ENCODE measurements at regions of chr19 and their contacts with region 1.

Region 1: GRCh38 chr19:38402967-38403861 is at the start of gene FAM98C:
- DNase-seq: peak; percentile 95 to 99 (median 97)
- H3K4me3 ChIP-seq: peak within 1 kb of the TSS; percentile 82
- H3K27ac ChIP-seq: peak within 1 kb of the TSS in 1 of 2 donors; percentile 55
- H3K4me1 ChIP-seq: no peaks in the 10 kb centered on the region
- H3K27me3 ChIP-seq: no peaks in the 10 kb centered on the region
- CTCF ChIP-seq: peak; percentile 98 to 100 (median 99)
- EP300 ChIP-seq: no peak
- POLR2A ChIP-seq: no peak
- total RNA-seq, gene FAM98C: 16.5 to 23.7 (median 20.9) TPM

Region 2: DNA sequence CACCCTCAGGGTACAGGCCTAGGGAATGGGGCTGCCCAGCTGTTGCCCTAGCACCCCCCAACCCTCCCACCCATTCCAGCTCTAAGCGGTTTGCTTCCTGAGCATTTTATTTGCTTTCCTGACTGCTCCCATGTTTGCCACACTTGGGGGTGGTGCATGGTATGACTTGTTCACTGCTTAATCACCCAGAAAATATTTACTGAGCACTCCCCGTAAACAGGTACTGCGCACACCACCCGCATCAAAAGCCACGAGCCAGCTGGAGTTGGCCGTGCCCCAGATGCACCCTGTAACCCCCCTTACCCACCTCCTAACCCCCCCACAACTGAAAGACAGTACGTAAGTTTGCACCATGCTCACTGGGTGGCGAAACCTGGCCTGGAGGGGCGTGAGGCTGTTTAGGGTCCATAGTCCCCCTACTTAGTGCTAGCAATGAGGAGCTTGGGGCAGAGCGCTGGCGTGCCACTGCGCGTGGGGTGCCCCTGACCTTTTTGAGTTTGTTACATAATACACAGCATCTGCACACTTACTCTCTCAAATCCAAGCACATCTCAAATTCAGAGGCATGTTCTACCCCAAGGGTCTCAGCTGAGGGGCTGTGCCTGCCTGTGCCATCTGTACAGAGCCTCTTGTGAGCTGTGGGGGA is 209.0 kb before region 1 on chr19:
- intact Hi-C with region 1: no loop called
- DNase-seq: no peak
- H3K4me3 ChIP-seq: no peak overlapping the region
- H3K27ac ChIP-seq: no peak overlapping the region
- H3K4me1 ChIP-seq: no peaks in the 10 kb centered on the region
- H3K27me3 ChIP-seq: no peaks in the 10 kb centered on the region
- CTCF ChIP-seq: no peak
- EP300 ChIP-seq: no peak
- POLR2A ChIP-seq: no peak

Region 3: GRCh38 chr19:38387550-38388348 is 15.5 kb before region 1 on chr19 and contains the start of gene GGN:
- intact Hi-C with region 1: loop called in 1 of 4 experiments (anchors 2 kb)
- DNase-seq: peak; percentile 67 to 83 (median 81)
- H3K4me3 ChIP-seq: peak within 1 kb of the TSS; percentile 52
- H3K27ac ChIP-seq: peak within 1 kb of the TSS in 1 of 2 donors; percentile 31
- H3K4me1 ChIP-seq: peaks cover 10% of the 10 kb centered on the region
- H3K27me3 ChIP-seq: no peaks in the 10 kb centered on the region
- CTCF ChIP-seq: no peak
- EP300 ChIP-seq: no peak
- POLR2A ChIP-seq: no peak
- total RNA-seq, gene GGN: 0.24 to 0.75 (median 0.69) TPM in 5 of 7 donors, not detected in the others

Region 4: GRCh38 chr19:38452428-38453366 is 49.5 kb after region 1 on chr19:
- intact Hi-C with region 1: no loop called
- DNase-seq: no peak
- H3K4me3 ChIP-seq: no peak overlapping the region
- H3K27ac ChIP-seq: no peak overlapping the region
- H3K4me1 ChIP-seq: no peaks in the 10 kb centered on the region
- H3K27me3 ChIP-seq: no peaks in the 10 kb centered on the region
- CTCF ChIP-seq: no peak
- EP300 ChIP-seq: no peak
- POLR2A ChIP-seq: no peak

Region 5: DNA sequence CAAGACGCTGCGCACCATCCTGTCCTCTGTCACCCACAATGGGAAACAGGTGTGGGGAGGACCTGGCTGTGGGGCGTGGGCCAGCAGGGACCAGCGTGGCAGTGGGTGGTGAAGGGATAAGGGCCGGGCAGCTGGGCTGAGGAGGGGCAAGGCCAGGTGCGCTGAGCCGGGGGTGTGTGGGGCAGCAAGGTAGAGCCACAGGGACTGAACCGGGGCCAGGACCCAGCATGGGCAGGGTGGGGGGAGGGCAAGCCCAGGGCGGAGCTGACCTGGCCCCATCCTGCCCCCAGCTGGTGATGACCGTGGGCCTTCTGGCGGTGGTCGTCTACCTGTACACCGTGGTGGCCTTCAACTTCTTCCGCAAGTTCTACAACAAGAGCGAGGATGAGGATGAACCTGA is 176.9 kb after region 1 on chr19:
- intact Hi-C with region 1: no loop called
- DNase-seq: no peak
- H3K4me3 ChIP-seq: no peak overlapping the region
- H3K27ac ChIP-seq: no peak overlapping the region
- H3K4me1 ChIP-seq: no peaks in the 10 kb centered on the region
- H3K27me3 ChIP-seq: no peaks in the 10 kb centered on the region
- CTCF ChIP-seq: no peak
- EP300 ChIP-seq: no peak
- POLR2A ChIP-seq: no peak

Region 6: DNA sequence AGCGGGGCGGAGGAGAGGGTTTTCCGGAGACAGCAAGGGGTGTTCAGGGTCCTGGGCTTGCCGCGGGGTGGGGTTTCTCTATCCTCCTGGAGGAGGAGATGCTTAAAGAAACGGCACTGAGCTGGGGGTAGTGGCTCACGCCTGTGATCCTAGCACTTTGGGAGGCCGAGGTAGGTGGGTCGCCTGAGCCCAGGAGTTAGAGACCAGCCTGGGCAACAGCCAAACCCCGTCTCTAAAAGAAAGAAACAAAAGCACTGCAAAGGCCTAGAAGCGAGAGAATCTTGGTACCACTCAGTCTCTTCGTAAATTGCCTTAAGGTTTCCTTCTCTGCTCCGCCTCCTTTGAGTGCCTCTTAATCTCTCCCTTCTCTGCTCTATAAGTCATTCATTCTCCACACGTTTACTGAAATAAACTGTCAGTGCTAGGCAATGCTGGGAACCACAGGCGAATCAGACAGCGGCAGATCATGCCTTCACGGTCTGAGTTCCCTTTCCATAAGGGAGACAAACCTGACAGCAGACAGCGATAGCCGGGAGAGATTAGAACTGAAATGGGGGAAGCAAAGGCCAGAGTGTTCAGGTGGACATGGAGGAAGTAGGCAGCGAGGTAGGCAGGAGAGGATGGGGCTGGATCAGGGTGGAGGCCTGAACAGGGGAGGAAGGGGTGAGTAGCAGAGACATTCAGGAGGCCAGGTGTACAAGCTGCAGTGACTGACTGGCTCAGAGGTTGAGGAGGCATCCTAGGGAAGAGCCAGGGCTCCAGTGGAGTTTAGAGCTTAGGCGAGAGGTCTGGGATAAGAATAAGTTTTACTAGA is 216.4 kb after region 1 on chr19:
- intact Hi-C with region 1: loop called in 1 of 4 experiments (anchors 10 kb)
- DNase-seq: no peak
- H3K4me3 ChIP-seq: peak overlapping the region; percentile 87
- H3K27ac ChIP-seq: peak overlapping the region; percentile 26 to 46
- H3K4me1 ChIP-seq: peaks cover 12% of the 10 kb centered on the region
- H3K27me3 ChIP-seq: no peaks in the 10 kb centered on the region
- CTCF ChIP-seq: no peak
- EP300 ChIP-seq: no peak
- POLR2A ChIP-seq: no peak

Region 7: DNA sequence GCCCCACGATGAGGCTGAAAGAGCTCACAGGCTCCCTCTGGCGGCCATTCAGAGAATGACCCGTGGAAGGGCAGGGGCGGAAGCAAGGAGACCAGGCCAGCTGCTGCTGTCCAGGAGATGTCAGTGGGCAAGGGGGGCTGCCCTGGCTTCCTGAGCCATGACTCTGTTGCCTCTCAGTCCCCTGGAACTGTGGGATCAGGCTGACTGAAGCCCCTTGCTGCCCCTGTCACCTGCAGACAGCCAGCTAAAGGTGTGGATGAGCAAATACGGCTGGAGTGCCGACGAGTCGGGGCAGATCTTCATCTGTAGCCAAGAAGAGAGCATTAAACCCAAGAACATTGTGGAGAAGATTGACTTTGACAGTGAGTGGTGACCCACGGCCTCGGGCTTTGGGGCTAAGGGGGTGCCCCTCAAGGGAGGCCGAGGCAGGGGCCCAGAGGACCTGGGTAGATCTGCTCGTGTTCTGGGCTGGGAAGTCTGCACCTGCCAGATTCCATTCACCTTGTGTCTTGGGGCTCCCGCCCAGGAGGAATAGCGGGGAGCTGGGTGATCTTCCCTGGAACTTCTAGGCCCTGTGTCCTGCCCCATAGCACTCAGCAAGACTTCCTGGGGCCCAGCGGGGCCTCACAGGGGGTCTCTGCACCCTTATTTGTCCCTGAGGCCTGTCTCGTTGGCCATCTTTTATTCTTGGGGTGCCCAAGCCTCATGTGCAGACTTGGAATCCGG is 231.7 kb after region 1 on chr19:
- intact Hi-C with region 1: loop called in 1 of 4 experiments (anchors 10 kb)
- DNase-seq: peak; percentile 61 to 87 (median 81)
- H3K4me3 ChIP-seq: no peak overlapping the region
- H3K27ac ChIP-seq: no peak overlapping the region
- H3K4me1 ChIP-seq: no peaks in the 10 kb centered on the region
- H3K27me3 ChIP-seq: no peaks in the 10 kb centered on the region
- CTCF ChIP-seq: peak; percentile 81 to 96 (median 87)
- EP300 ChIP-seq: no peak
- POLR2A ChIP-seq: no peak

Region 8: GRCh38 chr19:38917516-38918491 is 514.6 kb after region 1 on chr19:
- intact Hi-C with region 1: loop called in 2 of 4 experiments (anchors 10 kb)
- DNase-seq: peak in 1 of 5 donors; percentile 36
- H3K4me3 ChIP-seq: no peak overlapping the region
- H3K27ac ChIP-seq: no peak overlapping the region
- H3K4me1 ChIP-seq: no peaks in the 10 kb centered on the region
- H3K27me3 ChIP-seq: no peaks in the 10 kb centered on the region
- CTCF ChIP-seq: no peak
- EP300 ChIP-seq: no peak
- POLR2A ChIP-seq: no peak

Region 9: DNA sequence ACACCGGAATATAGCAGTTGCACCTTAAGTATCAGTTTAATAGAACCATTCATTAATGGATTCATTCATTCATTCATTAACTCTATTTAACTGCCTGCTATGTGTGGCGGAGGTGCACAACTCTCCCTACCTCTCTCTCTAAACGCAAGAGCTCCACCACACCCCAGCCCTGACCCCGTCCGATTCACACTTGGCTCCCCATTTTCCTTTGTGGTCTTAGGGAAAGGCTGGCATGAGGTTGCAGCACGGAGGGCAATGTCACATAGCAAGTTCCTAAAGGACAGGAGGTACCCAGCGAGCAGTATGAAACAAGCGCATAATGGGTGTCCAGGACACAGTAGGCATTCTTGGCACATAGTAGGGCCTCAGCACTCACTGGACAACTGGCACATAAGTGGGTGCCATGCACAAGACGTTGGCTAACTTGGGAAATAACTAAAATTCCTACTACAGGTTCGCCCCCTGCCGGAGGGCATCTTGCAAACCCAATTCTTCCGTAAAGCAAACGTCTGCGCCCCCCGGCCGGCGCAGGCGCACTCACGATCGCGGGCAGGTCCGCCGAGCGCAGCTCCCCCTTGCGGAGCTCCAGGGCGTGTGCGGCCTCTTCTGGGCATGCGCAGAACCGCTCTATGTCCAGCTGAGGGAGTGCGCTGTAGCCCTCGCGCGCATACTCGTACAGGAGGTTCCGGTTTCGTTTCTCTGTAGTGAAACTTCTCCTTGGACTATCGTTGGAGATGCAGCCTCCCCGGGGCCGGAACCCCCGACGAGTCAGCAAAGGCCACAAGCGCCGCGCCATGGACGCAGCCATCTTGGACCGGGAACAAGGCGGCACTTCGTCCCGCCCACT is 526.9 kb after region 1 on chr19 and contains the start of gene SARS2:
- intact Hi-C with region 1: loop called in 2 of 4 experiments (anchors 5 to 10 kb)
- DNase-seq: peak; percentile 91 to 96 (median 93)
- H3K4me3 ChIP-seq: peak within 1 kb of the TSS; percentile 91
- H3K27ac ChIP-seq: peak within 1 kb of the TSS; percentile 90 to 92
- H3K4me1 ChIP-seq: peaks cover 12% of the 10 kb centered on the region
- H3K27me3 ChIP-seq: no peaks in the 10 kb centered on the region
- CTCF ChIP-seq: peak; percentile 98 to 99 (median 99)
- EP300 ChIP-seq: no peak
- POLR2A ChIP-seq: no peak
- total RNA-seq, gene SARS2: 9.8 to 20.6 (median 18.0) TPM